GM12878 (cell line): ENCODE measurements at regions of chr2 and their contacts with region 1.

Region 1: GRCh38 chr2:205984381-205984780 is 101.6 kb downstream of the INO80D start:
- DNase-seq: peak; percentile 48
- ATAC-seq: peak; percentile 91
- H3K4me3 ChIP-seq: peak overlapping the region; percentile 20; the same call in 1 of the 2 replicates
- H3K27ac ChIP-seq: peak overlapping the region; percentile 63
- H3K4me1 ChIP-seq: peaks cover 4% of the 10 kb centered on the region; the same call in 1 of the 2 replicates
- H3K27me3 ChIP-seq: no peaks in the 10 kb centered on the region
- CTCF ChIP-seq: no peak; a peak in 1 of 6 replicates
- EP300 ChIP-seq: no peak
- POLR2A ChIP-seq: no peak
- RAD21 ChIP-seq: no peak

Region 2: DNA sequence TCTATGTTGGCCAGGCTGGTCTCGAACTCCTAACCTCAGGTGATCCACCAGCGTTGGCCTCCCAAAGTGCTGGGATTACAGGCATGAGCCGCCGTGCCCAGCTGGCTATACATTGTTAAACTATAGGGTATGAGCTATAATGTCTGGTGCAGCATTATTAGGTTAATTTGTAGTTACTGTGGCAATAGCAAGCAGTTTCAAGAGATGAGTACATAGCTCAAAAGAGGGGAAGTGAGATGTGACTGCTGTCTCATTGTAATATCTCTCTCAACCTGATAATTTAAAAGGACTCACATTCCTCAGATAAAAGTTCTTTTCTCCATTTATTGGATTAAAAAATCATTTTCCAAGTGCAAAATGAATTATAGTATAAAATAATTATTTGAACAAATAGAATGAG is 14.8 kb before region 1 on chr2:
- CTCF ChIA-PET with region 1: interaction called, 6 read pairs
- POLR2A ChIA-PET with region 1: interaction called, 7 read pairs
- RAD21 ChIA-PET with region 1: interaction called, 13 read pairs
- SMC1A ChIA-PET with region 1: interaction called, 8 read pairs
- in situ Hi-C with region 1: no loop called
- intact Hi-C with region 1: no loop called
- DNase-seq: no peak
- ATAC-seq: peak; percentile 89
- H3K4me3 ChIP-seq: no peak overlapping the region
- H3K27ac ChIP-seq: no peak overlapping the region
- H3K4me1 ChIP-seq: no peaks in the 10 kb centered on the region
- H3K27me3 ChIP-seq: no peaks in the 10 kb centered on the region; a peak in 3 of 4 replicates
- CTCF ChIP-seq: no peak
- EP300 ChIP-seq: no peak
- POLR2A ChIP-seq: no peak
- RAD21 ChIP-seq: no peak